ENCODE measurements at regions of chr20 and their contacts with region 1.

Region 1: DNA sequence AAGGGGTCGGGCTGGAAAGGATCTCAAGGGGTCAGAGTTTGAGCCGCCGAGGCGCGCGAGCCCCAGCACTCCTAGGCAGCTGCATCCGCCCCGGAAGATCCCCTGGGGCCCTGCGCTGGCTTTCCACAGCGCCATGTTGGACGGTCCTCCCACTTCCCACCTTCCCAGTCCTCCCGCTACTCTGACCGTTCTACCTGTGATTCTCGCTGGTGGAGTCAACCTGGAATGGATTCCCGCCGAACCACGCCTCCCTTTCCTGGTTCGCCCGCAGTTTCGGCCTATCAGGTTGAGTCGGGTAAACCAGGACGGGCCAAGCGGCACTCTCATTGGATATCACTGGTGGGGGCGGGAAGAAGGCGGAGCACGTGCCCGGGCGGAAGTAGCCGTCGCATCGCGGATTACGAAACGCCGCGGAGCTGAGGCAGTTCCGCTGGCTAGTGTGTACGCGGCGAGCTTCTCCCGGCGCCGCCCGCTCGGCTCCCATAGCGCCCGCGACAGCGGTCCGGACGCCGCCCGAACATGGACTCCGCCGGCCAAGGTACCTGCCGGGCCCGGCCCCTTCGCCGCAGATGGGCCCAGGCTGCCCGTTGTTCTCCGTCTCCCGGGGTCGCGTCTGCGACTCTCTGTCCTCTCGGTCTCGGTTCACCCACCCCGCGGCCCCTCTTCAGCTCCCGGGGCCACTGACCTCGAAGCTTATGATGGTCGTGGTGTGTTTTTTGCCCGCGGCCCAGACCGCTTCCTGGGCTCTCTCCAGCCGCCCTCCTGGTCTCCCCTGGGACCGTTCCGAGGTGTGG is at the start of gene TPD52L2:
- DNase-seq: peak; percentile 100
- ATAC-seq: peak; percentile 86
- H3K4me3 ChIP-seq: peak within 1 kb of the TSS; percentile 78 to 96 (median 87)
- H3K27ac ChIP-seq: peak within 1 kb of the TSS; percentile 89
- H3K4me1 ChIP-seq: peaks cover 42% of the 10 kb centered on the region
- H3K27me3 ChIP-seq: no peaks in the 10 kb centered on the region; a peak in 1 of 5 replicates
- CTCF ChIP-seq: no peak; the same call in 1 of the 2 replicates
- EP300 ChIP-seq: peak; percentile 34 to 48; a peak in 1 of 4 replicates
- POLR2A ChIP-seq: peak in 1 of 2 experiments; percentile 98; a peak in 2 of 4 replicates
- RAD21 ChIP-seq: peak; percentile 75
- total RNA-seq, gene TPD52L2: 156 and 187 TPM in 2 replicates

Region 2: GRCh38 chr20:63641792-63642544 is 223.1 kb before region 1 on chr20:
- CTCF ChIA-PET with region 1: no interaction called
- POLR2A ChIA-PET with region 1: interaction called, 14 read pairs
- in situ Hi-C with region 1: no loop called
- intact Hi-C with region 1: no loop called
- DNase-seq: peak; percentile 90
- ATAC-seq: peak; percentile 77
- H3K4me3 ChIP-seq: peak overlapping the region; percentile 49 to 81 (median 63)
- H3K27ac ChIP-seq: peak overlapping the region; percentile 56
- H3K4me1 ChIP-seq: peaks cover 20% of the 10 kb centered on the region
- H3K27me3 ChIP-seq: no peaks in the 10 kb centered on the region; a peak in 1 of 5 replicates
- CTCF ChIP-seq: peak; percentile 74
- EP300 ChIP-seq: no peak
- POLR2A ChIP-seq: peak; percentile 41 to 73; a peak in 3 of 4 replicates
- RAD21 ChIP-seq: peak; percentile 90

Region 3: DNA sequence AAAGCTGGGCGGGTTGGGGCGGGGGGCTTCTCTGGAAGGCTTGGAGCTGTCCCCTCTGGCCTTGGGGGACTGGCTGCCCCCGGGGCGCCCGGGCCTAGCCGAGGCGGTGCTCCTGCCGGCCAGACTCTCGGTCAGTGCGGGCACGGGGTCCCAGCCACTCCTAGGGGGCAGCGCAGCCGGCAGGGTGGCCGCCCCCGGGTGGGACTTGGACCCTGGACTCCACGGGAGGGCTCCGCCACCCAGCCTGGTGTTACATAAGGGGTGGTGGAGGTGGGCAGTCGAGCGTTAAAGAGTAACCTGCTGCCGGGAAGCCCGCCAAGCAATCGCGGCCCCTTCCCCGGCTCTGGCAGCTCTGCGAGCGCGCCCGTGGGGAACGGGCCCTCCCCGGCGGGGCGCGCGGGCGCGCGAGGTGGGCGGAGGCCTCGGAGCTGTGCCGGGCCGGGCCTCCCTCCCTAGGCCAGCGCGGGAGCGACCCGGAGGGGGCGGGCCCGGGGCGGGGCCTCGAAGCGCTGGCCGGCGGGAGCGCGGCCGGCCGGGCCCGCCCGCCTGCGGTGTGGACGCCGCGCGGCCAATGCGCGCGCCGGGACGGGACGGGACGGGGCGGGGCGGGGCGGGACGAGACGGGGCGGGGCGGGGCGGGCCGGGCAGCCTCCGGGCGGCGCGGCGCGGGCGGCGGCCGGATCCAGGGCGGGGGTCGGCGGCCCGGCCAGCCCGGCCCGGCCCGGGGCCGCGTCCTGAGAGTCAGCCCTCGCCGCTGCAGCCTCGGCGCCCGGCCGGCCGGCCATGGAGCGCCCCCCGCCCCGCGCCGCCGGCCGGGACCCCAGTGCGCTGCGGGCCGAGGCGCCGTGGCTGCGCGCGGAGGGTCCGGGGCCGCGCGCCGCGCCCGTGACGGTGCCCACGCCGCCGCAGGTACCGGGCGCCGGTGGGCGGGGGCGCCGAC is 125.6 kb before region 1 on chr20 and contains the start of gene SLC2A4RG:
- CTCF ChIA-PET with region 1: no interaction called
- POLR2A ChIA-PET with region 1: interaction called, 56 read pairs
- in situ Hi-C with region 1: no loop called
- intact Hi-C with region 1: loop called (anchors 10 kb)
- DNase-seq: peak; percentile 94
- ATAC-seq: peak; percentile 15
- H3K4me3 ChIP-seq: peak within 1 kb of the TSS; percentile 74 to 93 (median 85)
- H3K27ac ChIP-seq: peak within 1 kb of the TSS; percentile 93
- H3K4me1 ChIP-seq: peaks cover 64% of the 10 kb centered on the region
- H3K27me3 ChIP-seq: no peaks in the 10 kb centered on the region
- CTCF ChIP-seq: peak; percentile 54
- EP300 ChIP-seq: peak; percentile 36 to 77; a peak in 3 of 4 replicates
- POLR2A ChIP-seq: peak in 1 of 2 experiments; percentile 54; a peak in 2 of 4 replicates
- RAD21 ChIP-seq: peak; percentile 76
- total RNA-seq, gene SLC2A4RG: 47.4 and 91.4 TPM in 2 replicates

Region 4: DNA sequence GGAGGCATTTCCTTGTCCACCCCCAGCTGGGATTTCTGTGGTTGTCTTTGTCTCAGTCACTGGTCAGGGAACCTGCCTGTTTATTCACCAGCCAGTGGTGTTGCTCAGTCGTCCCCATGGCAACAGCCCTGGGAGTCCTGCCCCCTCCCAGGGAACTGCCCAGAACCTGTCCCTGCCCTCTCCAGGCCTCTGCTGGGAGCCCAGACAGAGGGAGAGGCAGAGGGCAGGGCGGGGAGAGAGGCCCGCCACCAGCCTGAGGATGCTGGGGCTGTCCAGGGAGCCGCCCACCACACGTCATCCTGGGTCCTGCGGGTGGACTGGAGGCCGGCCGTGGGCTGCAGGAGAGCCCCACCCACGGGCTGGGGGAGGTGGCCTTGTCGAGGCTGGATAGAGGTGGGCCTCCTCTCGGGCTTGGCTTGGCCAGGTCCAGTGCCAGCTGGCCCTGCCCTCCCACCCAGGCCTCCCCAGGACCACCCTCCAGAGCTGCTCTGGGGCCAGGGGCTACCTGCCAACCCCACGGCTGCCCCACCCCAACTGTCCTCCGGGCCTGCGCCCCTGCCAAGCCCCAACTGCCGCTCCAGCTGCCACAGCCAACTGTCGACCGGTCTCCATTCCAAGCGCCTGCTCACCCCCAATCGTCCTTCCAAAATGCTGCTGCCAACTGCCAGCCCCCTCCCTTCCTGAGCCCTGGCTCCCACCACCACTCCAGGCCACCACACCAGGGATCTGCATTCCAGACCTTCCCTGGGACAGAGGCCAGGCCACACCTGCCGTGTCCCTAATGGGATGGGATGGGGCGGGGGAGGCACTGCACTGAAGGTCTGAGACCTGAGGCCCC is 29.8 kb before region 1 on chr20:
- CTCF ChIA-PET with region 1: no interaction called
- POLR2A ChIA-PET with region 1: interaction called, 10 read pairs
- in situ Hi-C with region 1: no loop called
- intact Hi-C with region 1: no loop called
- DNase-seq: peak; percentile 96
- ATAC-seq: peak; percentile 81
- H3K4me3 ChIP-seq: peak overlapping the region in 1 of 3 experiments; percentile 41; a peak in 1 of 6 replicates
- H3K27ac ChIP-seq: no peak overlapping the region
- H3K4me1 ChIP-seq: peaks cover 60% of the 10 kb centered on the region
- H3K27me3 ChIP-seq: peaks cover 20 to 49% of the 10 kb centered on the region in 2 experiments
- CTCF ChIP-seq: no peak
- EP300 ChIP-seq: no peak
- POLR2A ChIP-seq: no peak
- RAD21 ChIP-seq: 0 out of 2 replicates have a peak, but pooled peaks have one; percentile 33

Region 5: GRCh38 chr20:63894358-63895201 is 29.5 kb after region 1 on chr20 and contains the start of gene DNAJC5:
- CTCF ChIA-PET with region 1: no interaction called
- POLR2A ChIA-PET with region 1: interaction called, 71 read pairs
- in situ Hi-C with region 1: no loop called
- intact Hi-C with region 1: loop called (anchors 2 kb)
- DNase-seq: peak; percentile 95
- ATAC-seq: peak; percentile 82
- H3K4me3 ChIP-seq: peak within 1 kb of the TSS; percentile 73 to 82 (median 77)
- H3K27ac ChIP-seq: peak within 1 kb of the TSS; percentile 60
- H3K4me1 ChIP-seq: peaks cover 39% of the 10 kb centered on the region
- H3K27me3 ChIP-seq: no peaks in the 10 kb centered on the region; a peak in 1 of 5 replicates
- CTCF ChIP-seq: no peak
- EP300 ChIP-seq: peak in 1 of 2 experiments; percentile 49; a peak in 1 of 4 replicates
- POLR2A ChIP-seq: peak; percentile 76 to 87
- RAD21 ChIP-seq: 0 out of 2 replicates have a peak, but pooled peaks have one; percentile 56
- total RNA-seq, gene DNAJC5: 54.3 and 64.5 TPM in 2 replicates